B cell (primary cell): ENCODE measurements at regions of chr2 and their contacts with region 1.

Region 1: DNA sequence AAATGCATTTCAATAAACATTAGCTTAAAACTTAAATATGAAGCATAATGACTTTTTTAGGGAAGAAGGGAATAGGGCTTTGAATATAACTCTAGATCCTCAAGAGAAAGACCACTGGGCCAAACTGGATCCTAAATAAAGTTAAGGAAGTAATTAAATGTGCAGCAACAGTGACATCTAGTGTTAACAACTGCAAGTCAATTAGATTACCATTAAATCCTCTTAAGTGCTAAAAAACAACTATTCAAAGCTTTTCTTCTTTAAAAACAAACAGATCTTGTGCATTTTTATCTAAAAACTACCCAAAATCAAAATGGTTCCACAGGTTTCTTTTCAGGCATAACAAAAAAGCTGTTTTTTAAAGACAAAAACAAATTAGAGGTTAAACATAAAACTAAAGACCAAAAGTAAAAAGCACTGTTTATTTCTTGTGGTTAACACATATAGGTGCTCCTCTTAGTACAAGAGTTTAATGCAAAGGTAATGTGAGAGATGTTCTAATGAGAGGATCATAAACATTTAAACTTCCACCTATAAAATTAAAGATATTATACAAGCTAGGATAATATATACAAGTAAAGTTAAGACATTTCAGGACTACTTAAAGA is 111.4 kb downstream of the THADA start:
- DNase-seq: peak; percentile 80
- ATAC-seq: peak; percentile 54
- H3K4me3 ChIP-seq: no peak overlapping the region
- H3K4me3 Mint-ChIP-seq: no peak overlapping the region
- H3K27ac ChIP-seq: no peak overlapping the region
- H3K27ac Mint-ChIP-seq: no peak overlapping the region
- H3K4me1 ChIP-seq: peaks cover 21 to 24% of the 10 kb centered on the region in 2 donors
- H3K4me1 Mint-ChIP-seq: peaks cover 27% of the 10 kb centered on the region
- H3K27me3 ChIP-seq: no peaks in the 10 kb centered on the region
- H3K27me3 Mint-ChIP-seq: no peaks in the 10 kb centered on the region
- CTCF ChIP-seq: peak; percentile 93

Region 2: DNA sequence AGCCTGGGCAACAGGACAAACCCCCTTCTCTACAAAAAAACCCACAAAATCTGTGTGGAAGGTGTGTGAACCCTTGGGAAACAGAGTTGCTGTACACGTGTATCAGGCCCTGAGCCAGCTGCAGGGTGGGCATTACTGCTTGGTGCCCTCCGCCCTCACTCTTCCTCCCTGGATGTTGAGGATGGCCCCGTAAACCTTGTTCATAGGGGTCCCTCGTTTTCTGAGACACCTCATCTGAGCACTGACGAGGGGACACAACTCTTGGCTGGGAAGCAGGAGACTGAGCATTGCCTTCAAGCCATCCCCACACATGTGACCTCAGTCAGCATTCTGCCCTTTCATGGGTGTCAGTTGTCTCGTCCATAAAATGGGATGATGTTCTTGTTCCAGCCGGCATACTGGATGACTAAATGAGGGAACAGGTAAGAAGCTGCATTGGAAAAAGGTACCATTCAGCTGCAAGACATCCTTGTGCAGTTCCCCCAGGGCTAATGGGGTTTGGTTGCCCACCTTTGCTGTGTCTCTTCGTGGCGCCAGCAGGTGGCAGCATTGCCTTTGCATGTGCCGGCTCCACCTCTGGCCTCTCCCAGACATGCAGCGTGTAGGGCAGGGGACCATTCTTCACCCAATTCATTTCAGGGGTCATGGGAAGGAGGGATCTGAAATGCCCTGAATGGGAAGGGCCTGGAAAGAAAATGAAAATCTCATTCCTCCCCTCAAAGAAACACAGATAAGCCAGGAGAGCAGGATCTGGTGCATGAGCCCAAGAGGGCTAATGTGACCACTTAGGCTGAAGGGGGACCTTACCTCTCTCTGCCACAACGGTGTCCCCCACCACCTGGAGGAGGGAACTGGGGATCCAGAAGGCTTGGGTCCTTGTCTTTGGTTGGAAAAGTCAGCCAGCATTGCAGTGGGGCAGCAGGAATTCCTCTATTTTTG is 655.7 kb before region 1 on chr2:
- CTCF ChIA-PET with region 1: interaction called, 49 read pairs
- POLR2A ChIA-PET with region 1: no interaction called
- intact Hi-C with region 1: no loop called
- DNase-seq: peak; percentile 82
- ATAC-seq: peak; percentile 95
- H3K4me3 ChIP-seq: no peak overlapping the region
- H3K4me3 Mint-ChIP-seq: peak overlapping the region; percentile 39
- H3K27ac ChIP-seq: no peak overlapping the region
- H3K27ac Mint-ChIP-seq: peak overlapping the region; percentile 26
- H3K4me1 ChIP-seq: peaks cover 8 to 13% of the 10 kb centered on the region in 2 donors
- H3K4me1 Mint-ChIP-seq: peaks cover 16% of the 10 kb centered on the region
- H3K27me3 ChIP-seq: no peaks in the 10 kb centered on the region
- H3K27me3 Mint-ChIP-seq: peaks cover 3% of the 10 kb centered on the region
- CTCF ChIP-seq: peak; percentile 92

Region 3: GRCh38 chr2:42954227-42954962 is 530.0 kb before region 1 on chr2:
- CTCF ChIA-PET with region 1: interaction called, 21 read pairs
- POLR2A ChIA-PET with region 1: no interaction called
- intact Hi-C with region 1: no loop called
- DNase-seq: no peak
- ATAC-seq: no peak
- H3K4me3 ChIP-seq: no peak overlapping the region
- H3K4me3 Mint-ChIP-seq: no peak overlapping the region
- H3K27ac ChIP-seq: no peak overlapping the region
- H3K27ac Mint-ChIP-seq: peak overlapping the region; percentile 55
- H3K4me1 ChIP-seq: peaks cover 28 to 34% of the 10 kb centered on the region in 2 donors
- H3K4me1 Mint-ChIP-seq: peaks cover 42% of the 10 kb centered on the region
- H3K27me3 ChIP-seq: no peaks in the 10 kb centered on the region
- H3K27me3 Mint-ChIP-seq: no peaks in the 10 kb centered on the region
- CTCF ChIP-seq: no peak

Region 4: DNA sequence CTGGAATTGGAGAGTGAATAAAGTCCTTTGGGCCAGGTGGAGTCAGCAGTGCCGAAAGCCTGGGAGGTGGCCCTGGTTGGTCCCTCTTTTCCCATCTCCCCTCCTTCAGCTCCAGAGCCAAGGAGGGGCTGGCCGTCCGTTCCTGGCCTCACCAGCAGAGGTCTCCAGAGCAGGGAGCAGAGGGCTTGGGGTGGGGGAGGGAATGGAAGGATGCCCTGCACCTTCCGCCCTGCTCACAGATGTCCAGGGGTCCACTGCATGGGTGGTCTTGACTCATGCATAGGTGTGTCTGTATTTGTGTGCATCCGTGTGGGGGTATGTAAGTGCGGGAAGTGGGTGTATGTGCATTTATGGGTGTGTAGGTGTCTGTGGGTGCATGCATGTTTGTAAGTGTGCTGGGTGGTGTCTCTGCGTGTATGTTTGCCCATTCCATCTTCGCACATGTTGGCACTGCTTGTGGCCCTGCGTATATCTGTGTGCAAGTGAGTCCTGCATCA is 459.9 kb before region 1 on chr2:
- CTCF ChIA-PET with region 1: interaction called, 30 read pairs
- POLR2A ChIA-PET with region 1: no interaction called
- intact Hi-C with region 1: no loop called
- DNase-seq: peak; percentile 60
- ATAC-seq: peak; percentile 75
- H3K4me3 ChIP-seq: no peak overlapping the region
- H3K4me3 Mint-ChIP-seq: no peak overlapping the region
- H3K27ac ChIP-seq: no peak overlapping the region
- H3K27ac Mint-ChIP-seq: no peak overlapping the region
- H3K4me1 ChIP-seq: peaks cover 7 to 8% of the 10 kb centered on the region in 2 donors
- H3K4me1 Mint-ChIP-seq: peaks cover 10% of the 10 kb centered on the region
- H3K27me3 ChIP-seq: no peaks in the 10 kb centered on the region
- H3K27me3 Mint-ChIP-seq: no peaks in the 10 kb centered on the region
- CTCF ChIP-seq: peak; percentile 55

Region 5: DNA sequence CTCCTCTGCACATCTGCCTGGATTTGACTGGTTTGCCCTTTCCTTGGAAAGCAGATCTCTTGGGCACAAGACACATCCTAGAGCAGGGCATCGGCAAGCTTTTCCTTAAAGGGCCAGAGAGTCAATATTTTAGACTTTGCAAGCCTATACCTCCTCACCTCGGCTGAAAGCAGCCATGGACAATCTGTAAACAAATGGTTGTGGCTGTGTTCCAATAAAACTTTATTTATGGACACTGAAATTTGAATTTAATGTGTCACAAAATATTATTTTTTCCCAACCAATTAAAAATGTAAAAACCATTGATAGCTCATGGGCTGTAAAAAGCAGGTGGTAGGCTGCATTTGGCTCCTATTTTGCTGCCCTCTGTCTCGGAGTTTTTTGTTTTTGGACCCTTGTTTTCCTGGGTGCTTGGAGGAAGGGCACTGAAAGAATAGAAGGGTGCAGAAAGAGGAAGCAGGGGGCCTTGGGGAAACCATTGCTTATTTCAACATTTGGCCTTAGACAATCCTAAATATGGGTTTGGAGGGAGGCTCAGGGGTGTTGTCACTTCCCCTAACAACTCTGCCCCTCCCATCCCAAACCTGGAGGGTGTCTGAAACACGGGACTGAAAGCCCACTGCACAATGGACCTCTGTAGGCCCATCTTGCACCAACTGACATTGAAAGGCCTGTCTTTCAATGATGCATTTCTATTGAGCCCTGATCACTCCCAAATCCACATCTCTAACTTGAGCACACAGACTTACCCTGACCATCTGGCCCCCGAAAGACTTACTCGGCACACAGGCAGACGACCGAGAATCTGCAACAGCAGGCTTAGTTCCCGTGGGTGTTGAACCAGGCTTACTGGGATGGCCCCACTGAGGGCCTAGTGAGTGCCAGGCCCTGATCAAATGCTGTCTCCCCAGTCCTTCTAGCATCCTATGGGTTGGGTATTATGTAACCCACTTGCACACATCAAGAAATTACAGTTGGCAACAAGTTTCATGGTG is 250.9 kb before region 1 on chr2:
- CTCF ChIA-PET with region 1: interaction called, 71 read pairs
- POLR2A ChIA-PET with region 1: no interaction called
- intact Hi-C with region 1: loop called (anchors 2 kb)
- DNase-seq: peak; percentile 28
- ATAC-seq: no peak
- H3K4me3 ChIP-seq: peak overlapping the region in 1 of 5 experiments; percentile 15
- H3K4me3 Mint-ChIP-seq: peak overlapping the region; percentile 41
- H3K27ac ChIP-seq: peak overlapping the region in 1 of 2 donors; percentile 38
- H3K27ac Mint-ChIP-seq: peak overlapping the region; percentile 89
- H3K4me1 ChIP-seq: peaks cover 37 to 61% of the 10 kb centered on the region in 2 donors
- H3K4me1 Mint-ChIP-seq: peaks cover 64% of the 10 kb centered on the region
- H3K27me3 ChIP-seq: no peaks in the 10 kb centered on the region
- H3K27me3 Mint-ChIP-seq: no peaks in the 10 kb centered on the region
- CTCF ChIP-seq: no peak

Region 6: DNA sequence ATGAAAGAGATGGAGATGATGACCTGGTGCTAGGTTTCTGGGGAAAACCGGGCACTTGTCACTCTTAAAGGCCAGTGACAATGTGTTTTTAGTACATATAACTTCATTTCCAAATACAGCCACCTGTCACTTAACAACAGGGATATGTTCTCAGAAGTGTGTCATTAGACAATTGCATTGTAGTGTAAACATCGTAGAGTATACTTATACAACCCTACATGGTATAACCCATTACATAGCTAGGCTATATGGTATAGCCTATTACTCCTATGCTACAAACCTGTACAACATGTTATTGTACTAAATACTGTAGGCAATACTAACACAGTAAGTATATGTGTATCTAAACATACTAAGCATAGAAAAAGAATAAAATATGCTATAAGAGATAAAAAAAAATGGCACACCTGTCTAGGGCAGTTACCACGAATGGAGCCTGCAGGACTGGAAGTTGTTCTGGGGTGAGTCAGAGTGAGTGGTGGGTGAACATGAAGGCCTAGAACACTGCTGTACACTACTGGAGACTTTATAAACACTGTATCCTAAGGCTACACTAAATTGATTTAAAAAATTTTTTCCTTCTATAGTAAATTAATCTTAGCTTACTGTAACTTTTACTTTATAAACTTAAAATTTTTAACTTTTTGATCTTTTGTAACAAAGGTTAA is 11.8 kb before region 1 on chr2:
- CTCF ChIA-PET with region 1: interaction called, 12 read pairs
- POLR2A ChIA-PET with region 1: no interaction called
- intact Hi-C with region 1: no loop called
- DNase-seq: no peak
- ATAC-seq: no peak
- H3K4me3 ChIP-seq: no peak overlapping the region
- H3K4me3 Mint-ChIP-seq: no peak overlapping the region
- H3K27ac ChIP-seq: no peak overlapping the region
- H3K27ac Mint-ChIP-seq: no peak overlapping the region
- H3K4me1 ChIP-seq: no peaks in the 10 kb centered on the region
- H3K4me1 Mint-ChIP-seq: no peaks in the 10 kb centered on the region
- H3K27me3 ChIP-seq: no peaks in the 10 kb centered on the region
- H3K27me3 Mint-ChIP-seq: no peaks in the 10 kb centered on the region
- CTCF ChIP-seq: no peak

Region 7: DNA sequence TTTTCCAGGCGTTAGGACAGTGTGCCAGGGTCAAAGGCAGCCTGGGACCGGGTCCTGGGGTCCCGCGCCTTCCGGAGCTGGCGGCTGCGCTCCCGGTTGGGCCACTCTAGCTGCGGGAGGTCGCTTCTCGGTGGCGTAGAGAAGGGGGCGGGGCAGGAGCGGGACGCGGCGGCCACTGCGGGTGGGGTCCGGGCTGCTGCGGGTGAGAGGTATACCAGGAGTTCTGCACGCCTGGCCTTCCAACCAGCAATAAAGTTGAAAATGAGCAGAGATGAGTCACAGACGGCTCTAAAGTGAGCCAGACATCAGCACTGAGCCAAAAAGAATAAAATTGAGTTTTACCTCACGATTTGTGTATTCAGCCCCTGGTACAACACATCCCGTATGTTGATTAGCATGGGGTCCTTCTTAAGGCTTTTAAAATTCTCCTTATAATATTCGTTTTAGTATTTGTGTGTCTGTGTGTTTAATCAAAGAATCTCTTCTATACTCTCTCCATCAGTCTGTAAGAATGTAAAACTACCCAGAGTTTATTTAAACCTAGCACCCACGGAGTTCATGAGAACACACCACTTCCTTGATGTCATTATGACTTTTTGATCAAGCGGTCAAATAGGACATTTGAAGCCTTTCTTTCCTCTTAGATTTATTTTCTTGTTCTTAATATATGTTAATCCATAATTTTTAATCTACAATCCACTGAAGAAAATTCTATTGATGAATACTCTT is 192.1 kb after region 1 on chr2 and contains the start of gene C1GALT1C1L:
- CTCF ChIA-PET with region 1: no interaction called
- POLR2A ChIA-PET with region 1: no interaction called
- intact Hi-C with region 1: no loop called
- DNase-seq: peak; percentile 14
- ATAC-seq: no peak
- H3K4me3 ChIP-seq: peak within 1 kb of the TSS in 4 of 5 experiments; percentile 24 to 46 (median 42)
- H3K4me3 Mint-ChIP-seq: peak within 1 kb of the TSS; percentile 23
- H3K27ac ChIP-seq: no peak within 1 kb of the TSS
- H3K27ac Mint-ChIP-seq: no peak within 1 kb of the TSS
- H3K4me1 ChIP-seq: peaks cover 4% of the 10 kb centered on the region in 2 donors
- H3K4me1 Mint-ChIP-seq: peaks cover 2% of the 10 kb centered on the region
- H3K27me3 ChIP-seq: peaks cover 0 to 12% (median 7%) of the 10 kb centered on the region in 4 experiments
- H3K27me3 Mint-ChIP-seq: peaks cover 38% of the 10 kb centered on the region
- CTCF ChIP-seq: no peak
- total RNA-seq, gene C1GALT1C1L: not detected in 2 replicates